ENCODE measurements at regions of chr14 and their contacts with region 1.

Region 1: DNA sequence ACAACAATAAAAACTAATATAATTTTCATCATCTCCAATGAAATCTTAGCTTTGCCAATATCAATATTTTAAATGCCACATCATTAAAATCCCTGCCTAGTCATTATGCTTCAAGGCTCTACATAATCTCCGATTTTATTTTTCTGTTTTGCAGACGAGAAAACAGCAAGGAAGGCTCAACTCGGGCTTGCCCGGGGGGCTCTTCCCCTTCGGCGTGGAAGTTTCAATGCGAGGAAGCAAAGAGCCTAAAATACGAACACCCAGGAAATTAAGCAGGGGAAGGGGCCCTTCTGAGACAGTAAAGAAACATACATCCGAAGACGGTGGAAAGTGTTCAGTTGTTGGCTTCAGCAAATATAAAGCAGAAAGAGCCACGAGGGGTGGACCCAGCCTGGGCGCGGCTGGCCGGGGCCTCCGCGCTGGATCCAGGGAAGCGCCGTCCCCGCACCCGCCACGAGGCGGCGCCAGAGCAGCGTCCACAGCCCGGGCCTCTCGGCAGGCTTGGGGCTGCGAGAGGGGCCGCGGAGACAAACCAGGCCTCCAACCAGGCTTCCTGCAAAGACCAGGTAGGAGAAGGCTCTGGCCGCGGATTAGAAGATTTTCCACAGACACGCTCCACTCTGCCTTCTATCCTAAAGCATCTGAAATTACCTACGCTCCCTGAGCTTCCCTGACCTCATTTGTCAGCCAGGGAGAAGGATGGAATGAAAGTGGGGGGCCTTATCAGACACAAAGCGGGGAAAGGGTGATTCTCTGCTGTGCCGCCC is 77.2 kb downstream of the SERPINA3 start:
- DNase-seq: no peak
- ATAC-seq: peak; percentile 93
- H3K4me3 ChIP-seq: peak overlapping the region in 2 of 3 experiments; percentile 18 to 21; a peak in 2 of 6 replicates
- H3K27ac ChIP-seq: no peak overlapping the region
- H3K4me1 ChIP-seq: peaks cover 21% of the 10 kb centered on the region
- H3K27me3 ChIP-seq: peaks cover 13 to 55% of the 10 kb centered on the region in 2 experiments
- CTCF ChIP-seq: peak; percentile 93
- EP300 ChIP-seq: no peak
- POLR2A ChIP-seq: no peak
- RAD21 ChIP-seq: peak; percentile 97

Region 2: GRCh38 chr14:94423453-94424056 is 265.8 kb before region 1 on chr14:
- CTCF ChIA-PET with region 1: no interaction called
- POLR2A ChIA-PET with region 1: no interaction called
- in situ Hi-C with region 1: loop called (anchors 10 kb)
- intact Hi-C with region 1: loop called (anchors 5 kb)
- DNase-seq: peak; percentile 80
- ATAC-seq: peak; percentile 91
- H3K4me3 ChIP-seq: 0 out of 6 replicates have a peak overlapping the region, but pooled peaks of 1 of the 3 experiments have one; percentile 38
- H3K27ac ChIP-seq: no peak overlapping the region
- H3K4me1 ChIP-seq: peaks cover 32% of the 10 kb centered on the region
- H3K27me3 ChIP-seq: no peaks in the 10 kb centered on the region
- CTCF ChIP-seq: peak; percentile 90
- EP300 ChIP-seq: no peak
- POLR2A ChIP-seq: no peak
- RAD21 ChIP-seq: peak; percentile 76

Region 3: DNA sequence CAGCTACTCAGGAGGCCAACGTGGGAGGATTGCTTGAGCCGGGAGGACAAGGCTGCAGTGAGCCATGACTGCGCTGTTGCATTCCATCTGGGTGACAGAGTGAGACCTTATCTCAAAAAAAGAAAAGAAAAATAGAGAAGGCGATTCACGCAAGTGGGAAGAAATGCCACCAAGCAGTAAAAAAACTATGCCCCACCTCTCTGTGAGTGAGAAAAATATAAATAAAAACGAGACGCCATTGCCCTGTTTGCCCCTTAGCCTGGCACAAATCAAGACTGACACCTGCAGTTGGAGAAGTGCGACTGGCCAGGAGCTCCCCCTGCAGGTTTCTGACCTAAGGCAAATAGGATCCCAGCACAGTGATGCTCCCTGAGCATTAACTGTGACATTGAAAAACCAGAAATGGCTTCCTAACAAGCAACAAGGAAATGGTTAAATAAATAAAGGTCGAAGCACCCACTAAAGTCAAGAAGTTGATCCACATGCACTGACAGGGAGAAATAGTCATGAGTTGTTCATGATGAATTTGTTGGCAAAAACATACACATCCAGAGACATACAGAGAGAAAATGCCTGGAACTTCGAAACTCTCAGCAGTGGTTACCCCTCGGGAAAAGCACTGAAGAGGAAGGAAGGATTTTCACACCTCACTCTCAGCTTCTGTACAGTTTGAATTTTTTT is 59.4 kb after region 1 on chr14:
- CTCF ChIA-PET with region 1: interaction called, 7 read pairs
- POLR2A ChIA-PET with region 1: no interaction called
- in situ Hi-C with region 1: loop called (anchors 5 kb)
- intact Hi-C with region 1: loop called (anchors 1 kb)
- DNase-seq: peak; percentile 21
- ATAC-seq: peak; percentile 90
- H3K4me3 ChIP-seq: no peak overlapping the region
- H3K27ac ChIP-seq: no peak overlapping the region
- H3K4me1 ChIP-seq: no peaks in the 10 kb centered on the region
- H3K27me3 ChIP-seq: peaks cover 8 to 23% of the 10 kb centered on the region in 2 experiments; a peak in 3 of 5 replicates
- CTCF ChIP-seq: peak; percentile 60
- EP300 ChIP-seq: no peak
- POLR2A ChIP-seq: no peak
- RAD21 ChIP-seq: no peak

Region 4: GRCh38 chr14:95098984-95099599 is 409.7 kb after region 1 on chr14:
- CTCF ChIA-PET with region 1: interaction called, 14 read pairs
- POLR2A ChIA-PET with region 1: no interaction called
- in situ Hi-C with region 1: loop called (anchors 10 kb)
- intact Hi-C with region 1: no loop called
- DNase-seq: peak; percentile 22
- ATAC-seq: peak; percentile 63; the same call in 2 of the 3 replicates
- H3K4me3 ChIP-seq: no peak overlapping the region
- H3K27ac ChIP-seq: no peak overlapping the region
- H3K4me1 ChIP-seq: no peaks in the 10 kb centered on the region
- H3K27me3 ChIP-seq: no peaks in the 10 kb centered on the region
- CTCF ChIP-seq: peak; percentile 59
- EP300 ChIP-seq: no peak
- POLR2A ChIP-seq: no peak
- RAD21 ChIP-seq: 0 out of 2 replicates have a peak, but pooled peaks have one; percentile 14

Region 5: DNA sequence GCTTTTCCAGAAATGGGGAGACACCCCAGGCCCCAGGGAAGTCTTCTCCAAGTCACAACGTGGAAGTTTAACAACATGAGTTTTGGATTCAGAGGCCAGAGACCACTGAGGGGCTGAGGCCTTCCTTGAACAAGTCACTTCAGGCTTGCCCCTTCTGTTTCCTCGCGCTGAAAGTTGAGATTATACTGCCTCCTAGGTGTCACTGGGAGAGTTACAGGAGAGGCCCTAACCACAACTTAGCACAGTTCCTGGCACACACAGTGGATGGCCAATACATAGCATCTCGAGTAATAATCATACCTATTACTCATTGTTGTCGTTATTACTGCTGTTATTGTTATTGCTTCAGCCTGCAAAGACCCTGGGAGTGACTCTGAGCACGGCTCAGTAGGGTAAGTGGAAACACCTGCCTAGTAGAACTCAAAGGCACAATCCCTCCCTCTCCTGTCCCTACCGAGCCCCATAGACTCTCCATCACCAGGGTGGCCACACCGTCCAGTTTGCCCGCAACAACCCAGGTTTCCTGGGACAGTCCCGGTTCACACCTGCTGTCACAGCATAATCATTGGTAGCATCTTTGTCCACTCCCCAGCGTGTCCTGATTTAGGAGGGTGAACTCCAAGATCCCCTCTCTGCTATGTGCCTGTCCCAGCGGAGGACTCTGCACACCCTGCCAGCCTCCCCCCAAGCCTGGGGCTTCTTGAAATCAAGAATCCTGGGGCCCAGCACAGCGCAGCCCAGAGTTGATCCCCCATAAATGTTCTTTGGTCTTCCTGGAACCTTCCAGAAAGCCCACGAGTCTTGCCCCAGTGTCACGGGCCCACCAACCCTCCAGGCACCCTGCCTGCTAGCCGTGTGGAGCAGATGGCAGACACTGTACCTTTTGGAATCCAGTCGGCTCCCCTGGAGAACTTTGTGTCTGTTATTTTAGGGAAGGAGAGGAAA is 742.1 kb after region 1 on chr14:
- CTCF ChIA-PET with region 1: no interaction called
- POLR2A ChIA-PET with region 1: no interaction called
- in situ Hi-C with region 1: loop called (anchors 5 kb)
- intact Hi-C with region 1: loop called (anchors 1 kb)
- DNase-seq: no peak
- ATAC-seq: peak; percentile 58
- H3K4me3 ChIP-seq: no peak overlapping the region
- H3K27ac ChIP-seq: no peak overlapping the region
- H3K4me1 ChIP-seq: peaks cover 32% of the 10 kb centered on the region
- H3K27me3 ChIP-seq: no peaks in the 10 kb centered on the region
- CTCF ChIP-seq: peak; percentile 68
- EP300 ChIP-seq: no peak
- POLR2A ChIP-seq: no peak
- RAD21 ChIP-seq: no peak

Measured in HepG2 (cell line).